Colonic mucosa (tissue), 4 donors: ENCODE measurements at regions of chr1 and their contacts with region 1.

Region 1: GRCh38 chr1:3491291-3492246 is 37.1 kb downstream of the ARHGEF16 start:
- DNase-seq: peak; percentile 77
- H3K4me3 ChIP-seq: no peak overlapping the region
- H3K27ac ChIP-seq: no peak overlapping the region
- H3K4me1 ChIP-seq: no peaks in the 10 kb centered on the region
- H3K27me3 ChIP-seq: no peaks in the 10 kb centered on the region
- CTCF ChIP-seq: peak; percentile 100

Region 2: DNA sequence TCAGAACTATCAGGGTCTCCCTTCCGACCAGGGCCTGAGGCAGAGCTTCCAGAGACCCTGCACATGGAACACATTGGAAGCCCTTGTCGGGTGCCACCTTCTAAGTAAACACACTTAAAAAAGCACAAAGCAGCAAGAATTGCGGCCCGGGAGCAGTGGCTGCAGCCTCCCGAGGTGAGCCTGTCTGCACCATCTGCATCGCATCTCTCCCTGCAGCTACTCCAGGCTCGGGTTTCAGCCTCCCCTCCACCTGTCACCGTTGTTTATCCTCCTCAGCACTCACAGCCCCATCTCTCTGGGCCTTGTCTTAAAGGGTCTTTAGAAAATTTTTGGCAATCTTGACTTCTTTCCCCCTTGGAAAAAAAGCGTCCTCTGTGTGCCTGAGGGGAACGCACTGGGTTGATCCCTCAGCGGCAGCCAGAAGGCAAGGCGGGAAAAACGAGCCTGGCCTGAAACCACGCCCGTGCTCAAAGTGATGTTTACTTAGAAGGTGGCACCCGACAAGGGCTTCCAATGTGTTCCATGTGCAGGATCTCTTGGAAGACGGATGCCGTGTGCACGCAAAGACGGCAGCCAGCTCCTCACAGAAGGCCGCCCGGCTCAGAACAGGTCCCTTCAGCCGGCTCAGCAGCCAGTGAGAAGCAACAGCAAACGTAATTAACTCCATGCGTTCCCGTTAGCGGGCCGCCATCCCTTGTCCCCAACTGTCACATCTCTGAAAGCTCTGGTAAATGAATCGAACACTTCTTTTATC is 132.0 kb before region 1 on chr1:
- intact Hi-C with region 1: no loop called
- DNase-seq: peak; percentile 75
- H3K4me3 ChIP-seq: no peak overlapping the region
- H3K27ac ChIP-seq: no peak overlapping the region
- H3K4me1 ChIP-seq: peaks cover 5% of the 10 kb centered on the region
- H3K27me3 ChIP-seq: no peaks in the 10 kb centered on the region
- CTCF ChIP-seq: no peak

Region 3: DNA sequence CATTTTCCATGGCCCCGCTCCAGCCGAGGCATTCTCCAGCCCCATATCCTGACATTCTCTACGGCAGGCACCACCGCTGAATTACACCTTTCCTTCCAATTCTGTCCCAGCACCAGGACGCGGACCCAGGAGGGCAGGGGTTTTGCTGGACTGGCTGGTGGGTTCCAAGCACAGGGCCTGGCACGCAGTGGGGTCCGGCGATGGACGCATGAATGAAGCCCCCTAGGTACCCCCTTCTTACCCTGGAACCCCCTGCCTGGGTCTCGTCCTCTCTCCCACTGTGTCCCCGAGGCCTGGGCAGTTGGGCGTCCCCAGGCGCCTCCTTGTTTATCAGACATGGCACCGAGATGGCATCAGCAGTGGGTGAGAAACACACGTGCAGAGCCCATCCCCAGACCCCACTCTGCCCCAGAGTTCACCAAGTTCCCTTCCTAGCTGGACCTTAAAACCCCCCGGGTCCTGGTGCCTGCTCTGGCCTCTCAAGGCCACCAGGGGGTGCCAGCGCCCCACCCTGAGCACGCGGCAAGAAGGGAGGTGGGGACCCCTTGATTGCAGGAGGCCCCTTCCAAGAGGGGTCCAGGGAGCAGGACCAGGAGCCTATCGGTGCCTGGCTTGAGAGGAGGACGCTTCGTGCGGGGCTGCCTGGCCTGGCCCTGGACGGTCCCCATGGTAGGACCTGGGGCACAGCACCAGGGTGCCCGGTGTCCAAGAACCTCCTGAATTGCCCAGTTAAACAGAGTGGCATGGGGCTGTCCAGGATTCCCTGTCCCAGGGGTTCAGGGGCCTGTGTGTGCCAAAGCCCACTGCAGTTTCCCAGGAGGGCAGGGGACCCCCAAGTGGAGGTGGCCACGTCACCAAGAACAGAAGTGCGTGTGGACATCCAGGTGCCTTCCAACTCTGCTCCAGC is 73.6 kb after region 1 on chr1:
- intact Hi-C with region 1: loop called (anchors 5 kb)
- DNase-seq: no peak
- H3K4me3 ChIP-seq: no peak overlapping the region
- H3K27ac ChIP-seq: no peak overlapping the region
- H3K4me1 ChIP-seq: no peaks in the 10 kb centered on the region
- H3K27me3 ChIP-seq: no peaks in the 10 kb centered on the region
- CTCF ChIP-seq: peak; percentile 76

Region 4: GRCh38 chr1:3618881-3619671 is 127.5 kb after region 1 on chr1:
- intact Hi-C with region 1: loop called (anchors 2 kb)
- DNase-seq: peak; percentile 79
- H3K4me3 ChIP-seq: no peak overlapping the region
- H3K27ac ChIP-seq: no peak overlapping the region
- H3K4me1 ChIP-seq: no peaks in the 10 kb centered on the region
- H3K27me3 ChIP-seq: no peaks in the 10 kb centered on the region
- CTCF ChIP-seq: peak; percentile 84

Region 5: GRCh38 chr1:3727042-3727824 is 235.7 kb after region 1 on chr1:
- intact Hi-C with region 1: loop called (anchors 10 kb)
- DNase-seq: no peak
- H3K4me3 ChIP-seq: no peak overlapping the region
- H3K27ac ChIP-seq: no peak overlapping the region
- H3K4me1 ChIP-seq: no peaks in the 10 kb centered on the region
- H3K27me3 ChIP-seq: no peaks in the 10 kb centered on the region
- CTCF ChIP-seq: no peak